ENCODE measurements at regions of chr3 and their contacts with region 1.

Region 1: DNA sequence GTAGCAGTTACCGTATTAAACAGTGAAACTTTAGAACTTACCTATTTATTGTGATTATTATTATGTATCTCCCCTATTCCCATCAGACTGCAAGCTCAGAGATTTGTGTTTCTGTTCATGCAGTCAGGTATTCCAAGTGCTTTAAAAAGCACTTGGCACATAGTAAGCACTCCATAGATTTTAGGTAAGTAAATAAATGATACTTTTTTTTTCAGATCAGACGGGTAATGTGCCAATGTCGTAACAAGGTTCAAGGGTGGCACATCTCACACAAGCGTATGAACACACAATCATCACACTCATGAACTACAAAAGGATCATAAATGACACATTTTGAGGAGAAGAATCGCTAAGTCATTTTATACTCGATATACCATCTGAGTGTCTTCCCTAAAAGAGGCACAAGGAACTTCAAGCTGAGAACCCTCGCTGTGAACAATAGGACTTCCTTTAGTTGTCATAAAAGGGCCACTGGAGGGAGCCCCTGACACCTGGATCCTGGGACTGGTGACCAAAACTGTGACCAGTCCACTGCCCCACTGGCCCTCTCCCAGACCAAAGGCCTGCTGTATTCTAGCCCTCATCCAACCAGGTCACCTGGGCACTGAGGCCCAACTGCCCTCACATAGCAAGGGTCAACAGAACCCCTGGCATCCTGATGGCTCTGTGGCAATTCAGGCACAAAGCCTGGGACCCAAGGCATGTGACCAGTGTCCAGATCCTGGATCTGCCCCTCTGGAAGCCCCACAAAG is 32.1 kb downstream of the KIF9 start:
- DNase-seq: peak; percentile 47
- ATAC-seq: peak; percentile 65 to 76

Region 2: GRCh38 chr3:47324278-47324865 is 73.9 kb after region 1 on chr3:
- intact Hi-C with region 1: loop called (anchors 1 to 5 kb)
- DNase-seq: peak; percentile 46
- ATAC-seq: peak; percentile 87 to 95

Region 3: GRCh38 chr3:47342151-47342550 is 91.7 kb after region 1 on chr3:
- intact Hi-C with region 1: no loop called
- DNase-seq: no peak
- ATAC-seq: no peak

Region 4: DNA sequence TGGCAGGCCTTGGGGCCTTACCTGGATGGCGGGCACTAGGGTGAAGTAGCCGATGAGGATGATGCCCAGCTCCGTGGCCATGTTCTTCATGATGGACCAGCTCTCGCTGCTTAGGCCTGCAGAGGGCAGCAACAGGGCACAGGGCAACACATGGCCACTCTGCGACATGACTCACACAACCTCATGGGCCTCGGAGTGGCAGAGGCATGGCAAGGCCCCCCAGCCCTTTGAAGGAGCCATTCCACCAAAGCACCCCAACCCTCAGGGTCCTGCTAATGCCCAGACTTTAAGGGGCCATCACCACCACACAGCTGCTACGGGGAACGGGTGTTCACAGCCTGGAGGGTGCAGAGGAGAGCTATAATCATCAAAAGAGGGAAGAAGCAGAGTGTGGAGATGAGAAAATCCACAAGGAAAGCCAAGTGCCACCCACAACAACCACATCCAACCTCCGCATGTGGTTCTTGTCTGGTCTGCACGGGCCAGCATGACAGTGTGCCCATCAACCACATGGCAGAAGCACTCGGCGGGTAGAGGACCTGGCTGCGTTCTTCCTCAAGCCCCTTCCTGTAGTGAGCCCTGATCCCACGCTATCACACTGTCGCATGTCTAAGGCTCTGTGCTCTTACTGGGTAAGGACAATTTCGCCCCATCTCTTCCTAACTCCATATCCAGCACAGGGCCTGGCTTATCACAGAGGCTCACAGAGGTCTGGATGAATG is 172.1 kb after region 1 on chr3:
- intact Hi-C with region 1: no loop called
- DNase-seq: no peak
- ATAC-seq: peak; percentile 3 to 7

Region 5: DNA sequence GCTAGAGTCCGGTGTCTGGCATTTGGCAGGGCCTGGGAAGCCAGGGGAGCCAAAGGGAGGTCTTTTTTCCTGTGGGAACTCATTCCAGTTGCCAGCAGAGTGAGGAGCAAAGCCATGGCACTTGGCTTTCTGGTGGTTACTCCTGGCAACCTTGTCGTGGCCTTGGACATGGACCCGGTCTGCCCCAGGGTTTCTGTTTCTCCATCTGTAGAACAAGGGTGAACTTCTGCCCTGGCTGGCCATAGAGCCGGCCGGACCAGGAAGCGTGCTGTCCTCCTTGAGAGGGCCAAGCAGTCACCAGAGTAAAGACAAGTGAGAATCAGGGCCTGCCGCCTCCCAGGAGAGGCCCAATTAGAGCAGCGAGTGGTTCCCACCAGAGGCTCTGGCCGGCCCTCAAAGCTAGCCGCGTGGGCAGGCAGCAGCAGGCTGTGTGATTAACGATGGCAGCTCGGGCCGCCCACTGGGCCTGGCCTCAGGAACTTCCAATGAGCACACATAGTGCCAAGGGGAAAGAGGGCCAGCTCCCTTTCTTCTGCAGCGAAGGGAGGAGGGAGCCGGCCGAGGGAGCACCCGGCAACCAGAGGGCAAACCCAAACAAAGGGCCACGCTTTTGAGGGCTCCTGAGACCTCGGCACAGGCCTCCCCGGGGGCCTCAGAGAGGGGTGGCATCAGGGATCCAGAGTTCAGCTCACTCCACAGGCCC is 292.1 kb after region 1 on chr3:
- intact Hi-C with region 1: no loop called
- DNase-seq: peak; percentile 33
- ATAC-seq: peak; percentile 78 to 91